Left lung (tissue), 14 donors: ENCODE measurements at regions of chr10 and their contacts with region 1.

Region 1: DNA sequence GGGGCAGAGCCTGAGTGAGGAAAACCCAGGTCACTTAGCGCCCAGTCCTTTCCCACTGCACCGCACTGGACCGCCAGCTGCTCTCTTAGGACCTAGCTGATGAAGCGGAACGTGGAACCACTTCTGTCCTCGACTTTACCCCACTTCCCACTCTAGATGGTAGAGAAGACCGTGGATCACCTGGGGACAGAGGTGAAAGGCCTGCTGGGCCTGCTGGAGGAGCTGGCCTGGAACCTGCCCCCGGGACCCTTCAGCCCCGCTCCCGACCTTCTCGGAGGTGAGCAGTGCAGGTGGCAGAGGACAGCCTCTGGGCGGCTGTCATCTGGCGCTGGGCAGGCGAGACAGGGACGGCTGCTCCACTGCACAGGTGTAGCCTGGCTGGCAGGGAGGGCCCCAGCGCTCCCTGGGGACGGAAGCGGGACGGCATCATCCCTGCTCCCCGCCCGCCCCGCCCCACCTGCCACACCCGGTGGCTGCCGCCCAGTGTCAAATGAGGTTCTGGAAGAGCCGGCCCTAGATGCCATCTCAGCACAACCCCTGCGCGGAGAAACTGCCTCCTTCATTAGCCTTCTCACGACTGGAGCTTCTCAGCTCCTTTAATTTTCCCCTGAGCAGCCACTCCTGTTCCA is 11.7 kb downstream of the PLAC9 start:
- DNase-seq: peak in 1 of 4 donors; percentile 86
- ATAC-seq: peak; percentile 69
- H3K4me3 ChIP-seq: peak overlapping the region in 1 of 2 donors; percentile 8
- H3K27ac ChIP-seq: no peak overlapping the region
- H3K4me1 ChIP-seq: peaks cover 11 to 27% of the 10 kb centered on the region in 2 donors
- H3K27me3 ChIP-seq: peaks cover 0 to 24% of the 10 kb centered on the region in 2 donors
- CTCF ChIP-seq: no peak

Region 2: DNA sequence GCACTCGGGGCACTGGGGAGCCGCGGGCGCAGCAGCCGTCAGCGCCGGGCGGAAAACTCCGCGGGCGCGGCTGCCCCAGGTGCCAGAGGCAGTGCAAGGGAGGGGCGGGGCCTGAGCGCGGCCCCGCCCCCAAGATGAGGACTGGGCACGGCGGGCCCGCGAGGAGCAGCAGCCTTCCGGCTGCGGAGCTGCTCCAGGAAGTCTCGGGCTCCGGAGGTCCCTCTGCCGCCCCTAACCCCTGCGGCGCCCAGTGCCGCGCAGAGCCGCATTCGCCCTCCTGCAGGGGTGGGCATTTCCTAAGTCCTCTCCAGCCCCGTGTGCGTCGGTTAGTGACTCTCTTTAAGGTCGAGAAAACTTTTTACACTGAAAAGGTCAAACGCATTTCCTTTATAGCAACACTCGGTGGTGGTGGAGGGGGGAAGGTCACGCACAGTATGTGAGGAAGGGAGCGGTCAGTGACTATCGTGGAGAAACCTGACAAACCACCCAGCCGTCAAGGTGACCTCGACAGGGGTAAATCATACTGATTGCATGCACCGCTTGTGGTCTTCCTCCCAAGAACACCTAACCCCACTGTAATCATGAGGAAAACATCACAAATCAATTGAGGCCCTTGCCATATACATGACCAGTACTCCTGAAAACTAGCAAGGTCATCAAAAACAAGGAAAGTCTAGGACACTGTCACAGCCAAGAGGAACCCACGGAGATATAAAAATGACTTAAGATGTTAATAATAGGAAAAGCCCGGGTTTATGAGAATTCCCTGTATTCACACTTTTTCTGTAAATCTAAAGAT is 61.5 kb after region 1 on chr10 and contains the start of gene ANXA11:
- intact Hi-C with region 1: loop called (anchors 5 to 10 kb)
- DNase-seq: peak; percentile 70 to 97 (median 88)
- ATAC-seq: peak; percentile 79
- H3K4me3 ChIP-seq: peak within 1 kb of the TSS; percentile 81 to 90
- H3K27ac ChIP-seq: peak within 1 kb of the TSS; percentile 97 to 99
- H3K4me1 ChIP-seq: peaks cover 34 to 50% of the 10 kb centered on the region in 2 donors
- H3K27me3 ChIP-seq: no peaks in the 10 kb centered on the region
- CTCF ChIP-seq: peak in 1 of 2 donors; percentile 11
- polyA plus RNA-seq, gene ANXA11: 90.9 to 106 (median 97.7) TPM

Region 3: DNA sequence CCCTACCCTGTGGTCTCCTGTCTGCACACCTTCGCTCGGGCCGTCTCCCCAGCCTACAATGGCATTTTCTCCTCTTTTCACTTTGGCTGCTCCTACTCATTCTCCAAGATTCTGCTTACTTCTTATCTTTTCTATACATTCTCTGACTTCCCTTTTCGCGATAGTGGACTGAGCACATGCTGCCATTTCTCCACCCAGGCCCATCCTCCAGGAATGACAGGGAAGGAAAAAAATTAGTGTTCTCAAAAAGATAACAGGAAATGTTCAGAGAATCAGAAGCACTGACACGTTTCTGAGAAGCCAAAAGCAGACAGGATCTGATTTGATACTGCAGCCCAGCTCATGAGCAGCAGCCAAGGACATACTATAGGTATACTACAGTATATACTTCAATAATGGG is 67.6 kb after region 1 on chr10:
- intact Hi-C with region 1: loop called (anchors 5 to 10 kb)
- DNase-seq: no peak
- ATAC-seq: no peak
- H3K4me3 ChIP-seq: no peak overlapping the region
- H3K27ac ChIP-seq: no peak overlapping the region
- H3K4me1 ChIP-seq: peaks cover 2 to 3% of the 10 kb centered on the region in 2 donors
- H3K27me3 ChIP-seq: no peaks in the 10 kb centered on the region
- CTCF ChIP-seq: no peak